Activated CD8-positive, alpha-beta T cell treated with anti-CD3 and anti-CD28 coated beads, Interleukin-2, amount 10 ng/mL, durations not matched to agents 7 days and 5 days (primary cell): ENCODE measurements at regions of chr10 and their contacts with region 1.

Region 1: DNA sequence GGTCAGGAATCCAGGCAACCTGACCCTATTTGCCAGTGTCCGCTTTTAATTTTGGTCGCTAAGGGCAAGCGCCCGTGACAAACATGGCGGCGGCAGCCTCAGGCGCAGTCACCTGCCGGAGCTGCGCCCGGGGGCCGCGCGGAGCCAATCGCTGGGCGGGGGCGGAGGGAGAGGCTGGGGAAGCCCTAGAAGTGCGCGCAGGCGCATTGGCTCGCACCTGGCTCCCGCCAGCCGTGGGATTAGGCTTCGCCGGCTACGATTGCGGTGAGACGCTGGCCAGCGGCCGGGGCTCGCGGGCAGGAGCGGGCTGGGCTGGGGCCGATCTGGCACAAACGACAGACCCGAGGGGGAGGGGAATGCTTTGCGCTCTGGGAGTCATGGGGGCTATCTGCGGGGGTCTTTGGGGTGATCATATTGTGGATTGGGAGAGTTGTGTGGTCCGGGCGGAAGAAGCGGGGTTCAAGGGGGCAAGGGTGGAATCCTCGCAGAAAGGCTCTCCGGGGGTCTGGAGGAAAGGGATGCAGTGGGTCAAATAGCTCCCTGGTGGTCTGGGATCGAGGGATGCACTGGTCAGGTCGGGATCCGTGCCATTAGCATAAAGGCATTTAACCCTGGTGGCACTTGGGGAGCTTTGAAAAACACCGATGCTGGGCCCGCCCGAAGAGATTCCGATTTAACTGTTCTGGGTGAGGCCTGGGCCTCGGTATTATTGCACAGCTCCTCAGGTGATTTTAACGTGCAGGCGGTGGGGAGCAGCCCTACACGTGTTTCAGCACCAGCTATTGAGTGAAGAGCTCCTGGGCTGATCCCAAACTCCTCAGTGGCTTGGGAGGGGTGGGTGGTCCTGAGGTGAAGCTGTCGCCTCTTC is 10.1 kb upstream of the C10orf95 start:
- DNase-seq: peak; percentile 94
- ATAC-seq: peak; percentile 97
- H3K4me3 Mint-ChIP-seq: peak overlapping the region; percentile 90
- H3K27ac Mint-ChIP-seq: peak overlapping the region; percentile 79
- H3K4me1 Mint-ChIP-seq: peaks cover 32% of the 10 kb centered on the region
- H3K27me3 Mint-ChIP-seq: no peaks in the 10 kb centered on the region

Region 2: DNA sequence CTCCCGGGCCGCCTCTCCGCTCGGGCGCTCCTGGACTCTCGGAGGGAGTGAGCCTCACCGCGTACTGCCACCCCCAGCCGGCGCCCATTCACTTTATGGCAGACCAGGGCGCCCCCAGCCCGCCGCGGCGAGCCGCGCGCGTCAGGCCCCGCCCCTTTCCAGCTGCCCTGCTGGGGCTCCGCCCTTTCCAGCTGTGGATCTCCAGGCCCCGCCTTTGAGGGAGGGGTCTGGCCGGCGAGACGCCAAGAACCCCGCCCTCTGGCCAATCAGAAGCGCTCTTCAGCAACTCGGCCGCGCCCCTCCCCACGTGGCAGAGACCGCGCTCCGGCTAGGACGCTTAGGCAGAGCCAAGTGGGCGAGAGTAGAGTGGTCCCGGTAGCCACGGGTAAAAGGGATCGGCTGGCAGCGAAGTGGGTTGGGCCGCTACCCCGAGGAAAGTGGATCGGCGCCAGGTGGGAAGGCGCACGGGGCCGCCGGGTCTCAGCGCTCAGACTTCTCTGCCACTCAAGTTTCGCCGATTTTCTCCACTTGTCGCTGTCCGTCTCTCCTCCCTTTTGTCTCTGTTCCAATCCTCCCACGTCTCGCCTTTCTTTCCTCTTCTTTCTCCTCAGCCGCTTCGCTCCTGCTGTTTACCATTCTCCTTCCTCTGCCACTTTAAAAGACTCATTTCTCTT is 219.8 kb before region 1 on chr10 and contains the start of gene PITX3:
- CTCF ChIA-PET with region 1: no interaction called
- POLR2A ChIA-PET with region 1: no interaction called
- DNase-seq: peak; percentile 92
- ATAC-seq: peak; percentile 60
- H3K4me3 Mint-ChIP-seq: peak within 1 kb of the TSS; percentile 68
- H3K27ac Mint-ChIP-seq: no peak within 1 kb of the TSS
- H3K4me1 Mint-ChIP-seq: peaks cover 30% of the 10 kb centered on the region
- H3K27me3 Mint-ChIP-seq: peaks cover 48% of the 10 kb centered on the region
- total RNA-seq, gene PITX3: not detected

Region 3: GRCh38 chr10:102450194-102450938 is 11.1 kb before region 1 on chr10:
- CTCF ChIA-PET with region 1: interaction called, 25 read pairs
- POLR2A ChIA-PET with region 1: interaction called, 25 read pairs
- DNase-seq: peak; percentile 93
- ATAC-seq: peak; percentile 85
- H3K4me3 Mint-ChIP-seq: peak overlapping the region; percentile 90
- H3K27ac Mint-ChIP-seq: peak overlapping the region; percentile 93
- H3K4me1 Mint-ChIP-seq: peaks cover 47% of the 10 kb centered on the region
- H3K27me3 Mint-ChIP-seq: no peaks in the 10 kb centered on the region

Region 4: DNA sequence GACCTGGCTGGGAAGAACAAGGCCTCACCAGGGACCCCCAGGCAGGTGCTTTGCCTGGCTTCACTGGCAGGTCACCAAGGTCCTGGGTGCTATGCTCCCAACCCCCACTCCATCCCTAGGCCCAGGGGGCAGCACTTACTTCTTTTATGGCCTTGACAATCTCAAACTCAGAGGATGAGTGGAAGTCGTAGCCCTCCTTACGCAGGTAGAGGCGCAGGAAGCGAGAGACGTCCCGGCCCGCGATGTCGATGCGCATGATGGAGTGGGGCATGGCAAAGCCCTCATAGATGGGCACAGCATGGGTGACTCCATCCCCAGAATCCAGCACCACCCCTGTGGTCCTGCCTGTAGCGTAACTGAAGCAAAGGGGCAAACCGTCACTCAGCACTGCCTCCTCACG is 22.6 kb after region 1 on chr10:
- CTCF ChIA-PET with region 1: interaction called, 15 read pairs
- POLR2A ChIA-PET with region 1: no interaction called
- DNase-seq: no peak
- ATAC-seq: no peak
- H3K4me3 Mint-ChIP-seq: no peak overlapping the region
- H3K27ac Mint-ChIP-seq: no peak overlapping the region
- H3K4me1 Mint-ChIP-seq: peaks cover 2% of the 10 kb centered on the region
- H3K27me3 Mint-ChIP-seq: no peaks in the 10 kb centered on the region